ENCODE measurements at regions of chr12 and their contacts with region 1.

Region 1: GRCh38 chr12:112012775-112013600 is at the starts of genes ERP29 and TMEM116:
- DNase-seq: peak; percentile 98 to 100 (median 99)

Region 2: DNA sequence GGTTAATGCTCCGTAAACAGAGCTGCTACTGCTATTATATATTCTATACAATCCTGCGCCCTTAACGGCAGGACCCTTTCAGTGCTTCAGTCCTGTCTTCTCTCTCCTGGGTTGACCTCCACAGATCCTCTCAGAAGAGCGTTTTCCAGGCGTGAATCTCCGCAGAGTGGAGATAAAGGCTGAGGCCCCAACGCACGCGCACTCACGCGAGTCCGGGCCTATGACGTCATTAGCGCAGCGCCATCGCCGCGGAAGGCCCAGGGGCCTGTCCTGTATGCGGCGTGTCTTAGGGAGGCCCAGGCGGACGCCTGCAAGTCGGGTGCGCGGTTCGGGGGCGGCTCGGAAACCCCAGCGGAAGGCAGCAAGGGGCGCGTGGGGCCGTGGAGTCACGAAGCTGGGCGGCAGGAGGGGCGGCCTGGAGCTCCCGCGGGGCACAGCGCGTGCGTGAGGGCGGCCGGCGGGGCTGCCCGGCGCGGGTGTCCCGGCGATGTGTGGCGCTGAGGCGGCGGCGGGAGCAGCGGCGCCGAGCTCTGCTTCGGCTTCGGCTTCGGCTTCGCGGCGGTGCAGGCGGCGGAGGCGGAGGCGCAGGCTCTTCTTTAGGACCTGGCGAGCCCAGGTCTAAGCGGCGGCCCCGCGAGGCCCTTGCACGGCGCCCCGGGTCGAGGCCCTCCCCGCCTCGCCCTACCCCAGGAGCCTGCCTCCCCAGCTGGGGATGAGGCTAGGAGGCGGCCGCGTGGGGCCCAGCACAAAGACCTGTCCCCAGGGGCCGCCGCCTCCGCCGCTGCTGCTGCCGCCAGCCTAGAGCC is 171.0 kb before region 1 on chr12 and contains the start of gene MAPKAPK5:
- intact Hi-C with region 1: loop called (anchors 10 kb)
- DNase-seq: peak; percentile 76 to 95 (median 89)

Region 3: GRCh38 chr12:111904446-111904975 is 108.5 kb before region 1 on chr12:
- intact Hi-C with region 1: no loop called
- DNase-seq: no peak

Region 4: DNA sequence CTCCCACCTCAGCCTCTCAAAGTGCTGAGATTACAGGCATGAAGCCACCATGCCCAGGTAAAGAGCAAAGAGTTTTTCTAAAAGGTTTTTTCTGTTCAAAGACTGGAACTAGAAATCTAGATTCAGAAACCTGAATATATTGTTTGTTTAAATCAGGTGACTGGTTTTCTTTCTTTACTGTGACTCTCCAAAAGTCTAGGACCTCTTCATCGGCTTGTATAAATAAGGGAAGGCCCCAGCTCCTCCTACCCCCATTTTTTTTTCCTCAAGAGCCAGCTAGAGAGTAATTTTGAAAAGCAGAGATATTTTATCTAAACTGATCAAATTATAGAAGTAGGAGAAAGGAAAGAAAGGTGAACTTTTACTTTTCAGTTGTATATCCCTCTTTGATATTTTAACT is 48.1 kb before region 1 on chr12:
- intact Hi-C with region 1: no loop called
- DNase-seq: no peak

Region 5: DNA sequence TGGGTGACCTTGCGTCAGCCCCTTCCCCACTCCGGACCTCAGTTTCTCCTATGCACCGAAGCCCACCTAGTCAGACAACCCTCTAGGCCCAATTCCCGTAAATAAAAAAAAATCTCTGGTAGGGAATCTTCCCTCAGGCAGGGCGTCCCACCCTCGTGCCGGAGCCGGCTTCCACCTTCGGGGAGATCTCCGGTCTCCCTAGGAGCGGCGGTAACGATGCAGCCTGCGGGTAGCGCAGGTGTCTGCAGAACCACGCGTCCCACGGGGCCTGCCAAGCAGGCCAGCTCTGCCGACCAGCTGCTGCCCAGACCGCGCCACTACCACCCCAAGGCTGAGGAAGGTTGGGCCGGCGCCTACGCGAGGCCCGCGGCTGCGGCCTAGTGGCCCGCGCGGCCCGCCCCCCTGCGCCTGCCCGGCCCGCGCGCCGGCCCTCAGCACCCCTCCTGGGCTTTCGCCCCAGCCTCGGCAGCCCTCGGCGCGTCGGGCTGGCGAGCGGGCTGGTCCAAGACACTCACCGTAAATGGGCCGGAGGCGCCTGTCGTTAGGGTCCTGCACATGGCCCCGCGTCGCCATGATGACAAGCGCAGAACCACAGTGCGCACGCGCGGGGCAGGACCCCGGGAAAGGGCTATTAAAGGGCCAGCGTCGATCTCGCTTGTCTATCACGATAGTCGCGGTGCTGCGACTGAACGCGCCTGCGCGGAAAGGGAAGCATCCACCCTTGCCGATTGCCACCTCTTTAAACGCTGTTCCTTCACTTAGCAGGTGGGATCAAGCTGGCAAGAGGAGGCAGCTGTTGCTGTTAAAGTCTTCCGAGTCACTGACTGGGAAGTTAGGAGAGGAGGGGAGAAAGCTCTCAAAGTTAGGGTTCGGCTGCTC is 95.5 kb after region 1 on chr12 and contains the start of gene NAA25:
- intact Hi-C with region 1: loop called (anchors 10 kb)
- DNase-seq: peak; percentile 75 to 95 (median 90)

Region 6: DNA sequence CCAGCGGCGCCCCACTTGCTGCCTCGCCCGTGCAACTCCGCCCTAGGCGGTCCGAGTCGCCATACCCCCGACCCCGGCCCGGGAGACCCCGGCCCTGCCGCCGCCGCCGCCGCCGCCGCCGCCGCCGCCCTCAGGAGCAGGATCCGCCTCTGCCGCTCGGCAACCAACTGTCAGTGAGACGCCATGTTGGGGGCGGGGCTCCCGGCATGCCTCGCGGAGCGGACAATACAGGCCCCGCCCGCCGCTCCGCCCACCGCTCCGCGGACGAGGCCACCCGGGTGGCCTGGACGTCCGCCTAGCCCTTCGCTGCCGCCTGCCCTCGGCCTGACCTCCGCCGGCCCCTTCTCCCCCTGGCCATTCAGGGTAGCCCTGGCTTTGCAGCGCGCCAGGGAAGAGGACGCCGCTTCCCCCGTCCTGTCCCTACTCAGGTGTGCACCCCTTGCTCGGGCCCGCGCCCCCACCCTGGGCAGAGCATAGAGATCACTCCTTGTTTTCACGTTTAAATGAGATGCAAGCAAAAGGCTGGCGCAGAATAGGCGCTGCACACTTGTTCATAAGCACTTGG is 369.3 kb after region 1 on chr12 and contains the start of gene HECTD4:
- intact Hi-C with region 1: loop called (anchors 5 kb)
- DNase-seq: peak; percentile 94 to 100 (median 98)

Measured in head of caudate nucleus (tissue), 42 donors.